SK-N-SH (cell line): ENCODE measurements at regions of chr14 and their contacts with region 1.

Region 1: DNA sequence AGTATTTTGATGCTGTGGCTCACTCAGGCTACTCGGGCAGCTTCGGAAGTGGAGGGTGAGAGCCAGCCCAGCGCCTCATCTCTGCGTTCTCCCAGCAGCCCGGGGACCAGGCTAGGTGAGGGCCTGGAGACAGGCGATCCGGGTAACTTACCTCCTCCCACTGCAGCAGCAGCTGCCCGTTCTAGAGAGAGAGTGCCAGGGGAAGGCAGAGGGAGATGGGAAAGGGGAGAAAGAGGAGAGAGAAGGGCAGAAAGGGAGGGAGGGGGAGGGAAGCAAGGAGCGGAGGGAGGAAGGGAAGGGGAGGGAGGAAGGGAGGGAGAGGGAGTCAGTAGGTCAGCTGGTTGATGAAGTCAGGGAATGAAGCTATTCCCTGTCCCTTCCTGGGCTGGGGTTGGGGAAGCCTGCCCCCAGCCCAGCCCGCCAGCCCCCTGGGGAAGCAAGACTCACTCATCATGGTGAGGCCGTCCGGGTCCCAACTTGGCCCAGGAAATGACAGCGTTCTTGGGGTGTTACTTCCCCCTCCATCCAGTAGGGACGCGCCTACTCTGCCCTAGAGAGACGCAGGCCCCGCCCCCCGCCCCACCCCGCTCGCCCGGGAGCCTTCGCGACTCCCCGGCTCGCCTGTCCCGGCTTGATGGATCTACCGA is at the start of gene IFI27L2:
- DNase-seq: peak; percentile 88
- H3K4me3 ChIP-seq: peak within 1 kb of the TSS; percentile 62 to 67
- H3K27ac ChIP-seq: peak within 1 kb of the TSS; percentile 46 to 56
- H3K4me1 ChIP-seq: peaks cover 0 to 7% of the 10 kb centered on the region in 2 experiments; a peak in 2 of 4 replicates
- H3K27me3 ChIP-seq: no peaks in the 10 kb centered on the region
- CTCF ChIP-seq: peak; percentile 12; the same call in 1 of the 2 replicates
- EP300 ChIP-seq: no peak
- RAD21 ChIP-seq: no peak
- polyA plus RNA-seq, gene IFI27L2: 200 and 208 TPM in 2 replicates

Region 2: GRCh38 chr14:94051115-94051514 is 78.1 kb before region 1 on chr14:
- CTCF ChIA-PET with region 1: interaction called, 100 read pairs
- POLR2A ChIA-PET with region 1: interaction called, 7 read pairs
- DNase-seq: no peak
- H3K4me3 ChIP-seq: no peak overlapping the region
- H3K27ac ChIP-seq: no peak overlapping the region
- H3K4me1 ChIP-seq: peaks cover 0 to 18% of the 10 kb centered on the region in 2 experiments; a peak in 2 of 4 replicates
- H3K27me3 ChIP-seq: no peaks in the 10 kb centered on the region
- CTCF ChIP-seq: peak; percentile 49
- EP300 ChIP-seq: no peak
- RAD21 ChIP-seq: peak; percentile 44

Region 3: GRCh38 chr14:94115058-94115591 is 14.1 kb before region 1 on chr14:
- CTCF ChIA-PET with region 1: interaction called, 11 read pairs
- POLR2A ChIA-PET with region 1: interaction called, 3 read pairs
- DNase-seq: peak; percentile 64
- H3K4me3 ChIP-seq: no peak overlapping the region
- H3K27ac ChIP-seq: peak overlapping the region in 1 of 2 experiments; percentile 5; a peak in 1 of 4 replicates
- H3K4me1 ChIP-seq: peaks cover 0 to 38% of the 10 kb centered on the region in 2 experiments; a peak in 1 of 4 replicates
- H3K27me3 ChIP-seq: no peaks in the 10 kb centered on the region
- CTCF ChIP-seq: no peak
- EP300 ChIP-seq: peak in 1 of 2 experiments; percentile 44; a peak in 1 of 4 replicates
- RAD21 ChIP-seq: no peak

Region 4: GRCh38 chr14:94143239-94143638 is 14.0 kb after region 1 on chr14:
- CTCF ChIA-PET with region 1: interaction called, 28 read pairs
- POLR2A ChIA-PET with region 1: no interaction called
- DNase-seq: no peak
- H3K4me3 ChIP-seq: no peak overlapping the region
- H3K27ac ChIP-seq: no peak overlapping the region
- H3K4me1 ChIP-seq: no peaks in the 10 kb centered on the region
- H3K27me3 ChIP-seq: no peaks in the 10 kb centered on the region
- CTCF ChIP-seq: peak; percentile 35; the same call in 1 of the 2 replicates
- EP300 ChIP-seq: no peak
- RAD21 ChIP-seq: peak; percentile 37

Region 5: GRCh38 chr14:94180655-94181271 is 51.5 kb after region 1 on chr14:
- CTCF ChIA-PET with region 1: interaction called, 18 read pairs
- POLR2A ChIA-PET with region 1: no interaction called
- DNase-seq: peak; percentile 38
- H3K4me3 ChIP-seq: peak overlapping the region; percentile 21 to 38; a peak in 2 of 4 replicates
- H3K27ac ChIP-seq: peak overlapping the region in 1 of 2 experiments; percentile 34; a peak in 1 of 4 replicates
- H3K4me1 ChIP-seq: peaks cover 0 to 3% of the 10 kb centered on the region in 2 experiments; a peak in 2 of 4 replicates
- H3K27me3 ChIP-seq: no peaks in the 10 kb centered on the region
- CTCF ChIP-seq: peak; percentile 77
- EP300 ChIP-seq: no peak
- RAD21 ChIP-seq: peak; percentile 71

Region 6: GRCh38 chr14:94394581-94395207 is 265.5 kb after region 1 on chr14:
- CTCF ChIA-PET with region 1: no interaction called
- POLR2A ChIA-PET with region 1: no interaction called
- DNase-seq: no peak
- H3K4me3 ChIP-seq: no peak overlapping the region
- H3K27ac ChIP-seq: no peak overlapping the region
- H3K4me1 ChIP-seq: peaks cover 0 to 12% of the 10 kb centered on the region in 2 experiments; a peak in 1 of 4 replicates
- H3K27me3 ChIP-seq: no peaks in the 10 kb centered on the region
- CTCF ChIP-seq: no peak
- EP300 ChIP-seq: no peak
- RAD21 ChIP-seq: no peak